ENCODE measurements at regions of chr12 and their contacts with region 1.

Region 1: GRCh38 chr12:59093073-59093772 is 172.9 kb upstream of the LRIG3 start:
- DNase-seq: no peak
- H3K4me3 ChIP-seq: no peak overlapping the region
- H3K27ac ChIP-seq: no peak overlapping the region
- H3K4me1 ChIP-seq: no peaks in the 10 kb centered on the region
- H3K27me3 ChIP-seq: no peaks in the 10 kb centered on the region
- CTCF ChIP-seq: no peak
- POLR2A ChIP-seq: no peak

Region 2: GRCh38 chr12:58540480-58541299 is 552.5 kb before region 1 on chr12:
- intact Hi-C with region 1: loop called (anchors 10 kb)
- DNase-seq: peak; percentile 65 to 70
- H3K4me3 ChIP-seq: no peak overlapping the region
- H3K27ac ChIP-seq: no peak overlapping the region
- H3K4me1 ChIP-seq: no peaks in the 10 kb centered on the region
- H3K27me3 ChIP-seq: no peaks in the 10 kb centered on the region
- CTCF ChIP-seq: peak in 5 of 6 experiments; percentile 16 to 82 (median 73)
- POLR2A ChIP-seq: no peak